HEK293T (cell line): ENCODE measurements at regions of chr2 and their contacts with region 1.

Region 1: DNA sequence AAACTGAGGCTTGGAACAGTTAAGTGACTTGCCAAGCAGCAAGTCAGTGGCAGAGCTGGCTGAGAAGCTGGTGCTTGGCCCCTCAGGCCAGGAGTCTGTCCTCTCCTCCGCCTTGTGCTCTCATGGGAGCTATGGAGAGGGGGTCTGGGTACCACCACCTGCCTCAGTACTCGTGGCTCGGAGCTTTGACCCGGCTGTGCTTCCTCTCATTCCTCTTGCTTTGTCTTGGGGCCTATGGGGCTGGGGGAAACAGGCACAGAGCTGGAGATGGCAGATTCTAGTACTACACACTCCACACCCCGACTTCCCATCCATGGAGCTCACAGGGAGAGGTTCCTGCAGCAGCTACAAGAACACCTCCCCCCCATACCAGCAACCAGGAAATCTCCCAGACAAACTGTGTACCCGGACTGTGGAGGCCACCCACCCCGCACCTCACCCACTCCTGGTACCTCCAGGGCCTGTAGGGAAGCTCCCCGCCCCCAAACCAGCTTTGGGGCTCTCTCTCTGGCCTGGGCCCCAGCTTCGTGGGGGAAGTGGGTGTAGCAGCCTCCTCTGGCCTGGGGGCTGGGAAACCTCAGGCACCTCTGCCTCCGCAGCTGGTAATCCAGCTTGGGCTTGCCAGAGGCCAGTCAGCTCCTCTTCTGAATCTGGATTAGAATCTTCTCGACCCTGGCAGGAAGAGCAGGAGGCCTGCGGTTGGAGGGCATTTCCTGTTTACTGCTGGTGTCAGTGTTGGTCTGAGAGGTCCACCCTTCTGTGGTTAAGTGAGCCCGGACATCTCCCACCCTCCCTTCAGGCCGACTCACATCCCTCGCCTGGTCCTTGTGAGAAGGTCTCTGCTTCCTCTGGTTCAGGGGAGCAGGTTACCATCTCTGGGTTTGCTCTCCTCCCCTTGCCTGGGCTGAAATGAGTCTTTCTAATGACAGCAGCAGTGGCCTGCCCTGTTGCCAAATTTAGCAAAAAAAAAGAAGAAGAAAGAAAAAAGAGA is 22.3 kb upstream of the RHOB start:
- DNase-seq: no peak

Region 2: GRCh38 chr2:20378792-20379519 is 45.6 kb before region 1 on chr2:
- CTCF ChIA-PET with region 1: interaction called, 16 read pairs
- POLR2A ChIA-PET with region 1: no interaction called
- DNase-seq: peak; percentile 71

Region 3: DNA sequence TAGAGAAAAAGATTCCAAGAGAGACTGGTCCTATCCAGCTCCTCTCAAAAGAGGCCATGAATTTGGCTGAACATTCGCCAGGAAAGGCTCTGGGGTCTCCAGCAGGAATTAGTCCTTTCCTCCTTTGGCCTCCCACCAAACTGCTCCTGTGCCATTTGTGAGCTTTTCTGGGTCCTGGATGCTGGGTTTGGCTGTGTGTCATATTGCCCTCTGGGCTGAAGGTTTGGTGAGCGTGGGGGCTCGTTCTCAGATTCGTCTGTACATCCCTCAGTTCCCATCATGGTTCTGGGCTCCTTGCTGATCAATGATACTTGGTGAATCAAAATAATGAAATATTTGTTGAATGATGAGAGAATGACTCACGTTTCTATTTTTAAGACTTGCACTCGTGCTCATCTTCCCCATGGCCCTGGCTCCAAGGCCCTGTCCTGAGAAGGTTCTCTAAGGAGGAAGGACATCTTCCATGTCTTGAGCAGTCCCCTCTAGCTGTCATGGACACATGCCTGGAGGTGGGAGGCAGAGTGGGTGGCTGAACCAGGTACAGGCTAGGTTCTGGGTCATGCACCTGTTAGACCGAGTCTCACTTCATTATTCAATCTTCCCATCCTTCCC is 25.5 kb before region 1 on chr2:
- CTCF ChIA-PET with region 1: no interaction called
- POLR2A ChIA-PET with region 1: no interaction called
- DNase-seq: no peak

Region 4: DNA sequence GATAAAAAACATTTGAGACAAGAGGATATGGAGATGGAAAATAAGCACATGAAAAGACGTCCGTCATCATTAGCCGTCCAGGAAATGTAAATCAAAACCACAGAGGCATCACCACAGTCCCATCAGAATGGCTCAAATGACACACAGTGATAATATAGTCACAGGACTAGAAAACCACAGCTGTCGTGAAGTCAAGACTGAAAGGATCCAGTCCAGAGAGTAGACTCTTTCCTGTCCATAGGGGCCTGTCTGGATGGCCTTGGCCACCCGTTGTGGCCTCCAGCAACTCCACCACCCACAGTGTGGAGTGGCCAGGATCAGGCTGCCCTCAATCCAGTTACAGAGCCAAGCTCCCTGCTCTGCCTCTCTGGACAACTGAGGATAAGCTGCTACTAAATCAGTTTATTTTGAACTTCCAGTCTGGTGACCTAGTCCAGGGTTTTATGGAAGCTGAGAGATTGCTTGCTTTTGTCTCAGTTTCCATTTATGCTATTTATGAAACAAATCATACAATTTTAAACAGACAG is 82.6 kb after region 1 on chr2:
- CTCF ChIA-PET with region 1: no interaction called
- POLR2A ChIA-PET with region 1: no interaction called
- DNase-seq: no peak